HEK293 (cell line): ENCODE measurements at regions of chr1 and their contacts with region 1.

Region 1: GRCh38 chr1:155172732-155173477 is at the start of gene KRTCAP2:
- H3K4me3 ChIP-seq: peak within 1 kb of the TSS; percentile 70
- H3K27ac ChIP-seq: peak within 1 kb of the TSS; percentile 52; the same call in 1 of the 2 replicates
- H3K4me1 ChIP-seq: no peaks in the 10 kb centered on the region
- CTCF ChIP-seq: peak; percentile 98

Region 2: DNA sequence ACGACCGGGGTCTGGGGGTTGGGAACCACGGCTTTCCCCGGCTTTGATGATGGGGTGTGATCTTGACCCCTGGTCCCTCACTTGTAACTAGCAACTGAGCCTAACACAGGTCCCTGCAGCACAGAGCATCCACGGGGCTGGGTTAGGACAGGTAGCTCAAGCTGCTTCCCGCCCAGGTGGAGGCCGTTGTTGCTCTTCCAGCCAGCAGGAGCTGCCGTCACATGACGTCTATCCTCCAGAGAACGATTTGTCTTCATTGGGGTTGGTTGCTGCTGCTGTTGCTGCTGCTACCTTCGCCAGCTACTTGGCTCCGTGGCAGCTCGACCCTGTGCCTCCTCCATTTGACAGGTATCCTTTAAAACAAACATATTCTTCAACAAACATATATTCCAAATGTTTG is 490.7 kb before region 1 on chr1:
- CTCF ChIA-PET with region 1: no interaction called
- POLR2A ChIA-PET with region 1: no interaction called
- H3K4me3 ChIP-seq: no peak overlapping the region
- H3K27ac ChIP-seq: no peak overlapping the region
- H3K4me1 ChIP-seq: 0 out of 2 replicates have a peak, but pooled peaks cover 3% of the 10 kb centered on the region
- CTCF ChIP-seq: no peak

Region 3: GRCh38 chr1:154878371-154879022 is 294.4 kb before region 1 on chr1:
- CTCF ChIA-PET with region 1: no interaction called
- POLR2A ChIA-PET with region 1: no interaction called
- H3K4me3 ChIP-seq: no peak overlapping the region
- H3K27ac ChIP-seq: no peak overlapping the region
- H3K4me1 ChIP-seq: no peaks in the 10 kb centered on the region
- CTCF ChIP-seq: peak; percentile 86

Region 4: DNA sequence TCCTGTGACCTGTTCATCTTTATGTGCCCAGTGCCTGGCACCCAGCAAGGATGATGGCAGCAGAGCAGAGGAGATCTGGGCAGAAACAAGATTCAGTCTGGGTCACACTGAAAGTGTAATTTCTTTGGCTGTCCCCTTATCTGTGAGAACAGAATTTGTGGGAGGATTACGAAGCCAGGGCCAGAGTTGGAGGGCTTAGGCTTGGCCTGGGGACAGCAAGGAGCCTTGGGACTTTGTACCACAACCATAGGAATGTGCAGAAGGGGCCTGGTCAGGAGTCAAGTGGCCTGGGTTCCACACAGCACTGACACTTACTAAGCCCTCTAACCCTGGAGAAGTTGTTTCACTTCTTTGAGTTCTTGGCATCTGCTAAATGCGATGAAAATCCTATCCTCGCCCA is 249.2 kb before region 1 on chr1:
- CTCF ChIA-PET with region 1: no interaction called
- POLR2A ChIA-PET with region 1: no interaction called
- H3K4me3 ChIP-seq: no peak overlapping the region
- H3K27ac ChIP-seq: no peak overlapping the region
- H3K4me1 ChIP-seq: no peaks in the 10 kb centered on the region
- CTCF ChIP-seq: no peak

Region 5: GRCh38 chr1:155091071-155091709 is 81.7 kb before region 1 on chr1:
- CTCF ChIA-PET with region 1: interaction called, 439 read pairs
- POLR2A ChIA-PET with region 1: interaction called, 17 read pairs
- H3K4me3 ChIP-seq: no peak overlapping the region
- H3K27ac ChIP-seq: no peak overlapping the region
- H3K4me1 ChIP-seq: peaks cover 13% of the 10 kb centered on the region
- CTCF ChIP-seq: peak; percentile 92

Region 6: GRCh38 chr1:155127105-155127964 is 45.6 kb before region 1 on chr1 and contains the start of gene EFNA1:
- CTCF ChIA-PET with region 1: interaction called, 17 read pairs
- POLR2A ChIA-PET with region 1: interaction called, 17 read pairs
- H3K4me3 ChIP-seq: peak within 1 kb of the TSS; percentile 62
- H3K27ac ChIP-seq: peak within 1 kb of the TSS; percentile 75
- H3K4me1 ChIP-seq: peaks cover 21% of the 10 kb centered on the region
- CTCF ChIP-seq: no peak; the same call in 1 of the 2 replicates

Region 7: GRCh38 chr1:155185351-155186066 is 12.6 kb after region 1 on chr1:
- CTCF ChIA-PET with region 1: interaction called, 15 read pairs
- POLR2A ChIA-PET with region 1: interaction called, 4 read pairs
- H3K4me3 ChIP-seq: no peak overlapping the region
- H3K27ac ChIP-seq: no peak overlapping the region
- H3K4me1 ChIP-seq: no peaks in the 10 kb centered on the region
- CTCF ChIP-seq: no peak

Region 8: GRCh38 chr1:155208541-155209311 is 35.8 kb after region 1 on chr1 and contains the start of gene MTX1:
- CTCF ChIA-PET with region 1: interaction called, 22 read pairs
- POLR2A ChIA-PET with region 1: interaction called, 6 read pairs
- H3K4me3 ChIP-seq: peak within 1 kb of the TSS; percentile 98
- H3K27ac ChIP-seq: peak within 1 kb of the TSS; percentile 86; the same call in 1 of the 2 replicates
- H3K4me1 ChIP-seq: peaks cover 4% of the 10 kb centered on the region
- CTCF ChIP-seq: 0 out of 2 replicates have a peak, but pooled peaks have one; percentile 4